Heart left ventricle (tissue), 16 donors: ENCODE measurements at regions of chr19 and their contacts with region 1.

Region 1: GRCh38 chr19:10000171-10000826 is 10.0 kb downstream of the COL5A3 start:
- DNase-seq: peak in 3 of 5 donors; percentile 60 to 64 (median 61)
- ATAC-seq: no peak
- H3K4me3 ChIP-seq: no peak overlapping the region
- H3K27ac ChIP-seq: peak overlapping the region in 2 of 12 donors; percentile 18 to 43
- H3K4me1 ChIP-seq: peaks cover 0 to 29% (median under 1%) of the 10 kb centered on the region in 12 donors
- H3K27me3 ChIP-seq: peaks cover 0 to 28% (median 2%) of the 10 kb centered on the region in 9 donors
- CTCF ChIP-seq: peak; percentile 46 to 74 (median 60)
- POLR2A ChIP-seq: no peak

Region 2: DNA sequence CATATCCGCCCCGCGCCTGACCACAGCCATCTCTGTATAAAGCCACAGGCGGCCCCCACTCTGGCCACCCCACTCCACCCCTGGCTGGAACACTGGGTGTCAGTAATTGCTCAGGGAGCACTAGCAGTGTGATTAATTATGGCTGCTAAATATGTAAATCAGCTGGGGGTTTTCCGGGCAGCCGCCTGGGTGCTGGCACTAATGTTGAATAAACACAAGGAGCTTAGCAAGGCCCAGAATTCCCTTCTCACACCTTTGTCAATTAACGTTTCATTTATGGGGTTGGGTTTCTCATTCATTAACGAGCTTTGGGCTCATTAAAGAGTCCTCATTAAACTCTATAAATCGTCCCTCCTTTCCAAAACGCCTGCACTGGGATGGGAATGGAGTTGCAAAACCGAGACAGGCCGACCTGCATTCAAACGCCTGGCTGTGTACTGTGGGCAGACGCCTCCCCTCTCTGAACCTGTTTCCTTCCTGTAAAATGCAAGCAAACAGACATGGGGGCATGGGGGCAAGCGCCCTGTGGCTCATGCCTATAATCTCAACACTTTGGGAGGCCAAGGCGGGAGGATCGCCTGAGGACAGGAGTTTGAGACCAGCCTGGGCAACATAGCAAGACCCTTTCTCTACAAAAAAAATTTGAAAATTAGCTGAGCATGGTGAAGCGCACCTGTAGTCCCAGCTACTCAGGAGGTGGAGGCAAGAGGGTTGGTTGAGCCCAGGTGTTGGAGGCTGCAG is 46.3 kb before region 1 on chr19:
- intact Hi-C with region 1: loop called in 4 of 10 experiments (anchors 5 to 10 kb)
- DNase-seq: no peak
- ATAC-seq: no peak
- H3K4me3 ChIP-seq: no peak overlapping the region
- H3K27ac ChIP-seq: no peak overlapping the region
- H3K4me1 ChIP-seq: no peaks in the 10 kb centered on the region
- H3K27me3 ChIP-seq: peaks cover 0 to 5% (median 0%) of the 10 kb centered on the region in 9 donors
- CTCF ChIP-seq: no peak
- POLR2A ChIP-seq: no peak

Region 3: GRCh38 chr19:10122045-10122444 is 121.7 kb after region 1 on chr19:
- intact Hi-C with region 1: no loop called
- DNase-seq: no peak
- ATAC-seq: no peak
- H3K4me3 ChIP-seq: no peak overlapping the region
- H3K27ac ChIP-seq: peak overlapping the region in 2 of 12 donors; percentile 27 to 62
- H3K4me1 ChIP-seq: peaks cover 0 to 30% (median 11%) of the 10 kb centered on the region in 12 donors
- H3K27me3 ChIP-seq: no peaks in the 10 kb centered on the region
- CTCF ChIP-seq: no peak
- POLR2A ChIP-seq: no peak